ENCODE measurements at regions of chr16 and their contacts with region 1.

Region 1: GRCh38 chr16:50747207-50747956 is 5.5 kb downstream of the CYLD start:
- DNase-seq: peak in 7 of 9 donors; percentile 52 to 80 (median 73)
- ATAC-seq: peak; percentile 87
- H3K4me3 ChIP-seq: peak overlapping the region; percentile 33
- H3K4me3 Mint-ChIP-seq: peak overlapping the region; percentile 74 to 99 (median 94)
- H3K27ac ChIP-seq: peak overlapping the region; percentile 100
- H3K27ac Mint-ChIP-seq: peak overlapping the region; percentile 85 to 98 (median 93)
- H3K4me1 ChIP-seq: peaks cover 30 to 66% of the 10 kb centered on the region in 2 donors
- H3K4me1 Mint-ChIP-seq: peaks cover 34 to 78% (median 69%) of the 10 kb centered on the region in 7 donors
- H3K27me3 ChIP-seq: no peaks in the 10 kb centered on the region
- H3K27me3 Mint-ChIP-seq: no peaks in the 10 kb centered on the region

Region 2: DNA sequence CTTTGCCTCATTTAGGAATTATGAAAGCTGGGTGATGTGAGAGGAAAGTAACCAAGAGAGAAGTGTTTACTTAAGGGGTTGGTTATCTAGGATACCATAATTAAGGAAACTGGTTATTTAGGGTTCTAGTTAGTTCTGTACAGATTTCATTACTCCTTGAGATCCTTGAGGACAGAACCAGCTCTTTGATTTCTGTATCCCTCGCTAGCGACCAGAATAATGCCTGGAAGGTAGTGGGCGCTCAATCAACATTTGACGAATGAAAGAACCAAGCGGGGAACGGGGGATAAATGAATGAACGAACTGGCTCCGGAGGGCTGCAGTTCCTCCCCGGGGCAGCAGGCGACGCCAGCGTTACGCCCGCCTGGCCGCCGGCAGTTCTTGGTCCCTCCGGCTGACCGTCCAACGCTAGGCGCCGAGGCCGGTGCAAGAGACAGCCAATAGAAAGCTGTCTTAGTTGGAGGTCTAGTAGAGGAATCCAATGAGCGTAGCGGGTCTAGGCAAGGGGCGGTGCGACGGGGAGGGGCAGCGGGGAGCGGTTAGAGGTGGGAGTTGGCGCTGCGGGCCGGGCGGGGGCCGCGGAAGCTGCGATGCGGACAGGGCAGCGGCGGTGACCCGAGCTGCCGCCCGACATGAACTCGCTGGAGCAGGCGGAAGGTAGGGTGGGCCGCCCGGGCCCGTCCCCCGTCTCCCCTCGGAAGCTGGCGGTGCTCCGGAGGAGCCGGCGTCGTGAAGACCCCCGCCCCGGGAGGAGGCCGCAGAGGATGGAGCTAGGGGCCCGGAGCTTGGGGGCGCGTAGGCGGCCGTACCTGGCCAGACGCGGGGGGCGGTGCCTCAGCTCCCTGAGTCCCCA is 722.5 kb before region 1 on chr16 and contains the start of gene CNEP1R1:
- CTCF ChIA-PET with region 1: interaction called, 5 read pairs
- POLR2A ChIA-PET with region 1: no interaction called
- intact Hi-C with region 1: loop called (anchors 1 to 5 kb)
- DNase-seq: peak; percentile 82 to 95 (median 92)
- ATAC-seq: peak; percentile 98
- H3K4me3 ChIP-seq: peak within 1 kb of the TSS; percentile 97
- H3K4me3 Mint-ChIP-seq: peak within 1 kb of the TSS; percentile 88 to 99 (median 96)
- H3K27ac ChIP-seq: peak within 1 kb of the TSS; percentile 81
- H3K27ac Mint-ChIP-seq: peak within 1 kb of the TSS; percentile 87 to 97 (median 94)
- H3K4me1 ChIP-seq: peaks cover 11 to 16% of the 10 kb centered on the region in 2 donors
- H3K4me1 Mint-ChIP-seq: peaks cover 5 to 42% (median 28%) of the 10 kb centered on the region in 7 donors
- H3K27me3 ChIP-seq: no peaks in the 10 kb centered on the region
- H3K27me3 Mint-ChIP-seq: peaks cover 0 to 16% (median 0%) of the 10 kb centered on the region in 5 donors
- total RNA-seq, gene CNEP1R1: 26.8 to 41.0 (median 34.3) TPM

Region 3: GRCh38 chr16:50245417-50246298 is 501.7 kb before region 1 on chr16:
- CTCF ChIA-PET with region 1: no interaction called
- POLR2A ChIA-PET with region 1: no interaction called
- intact Hi-C with region 1: loop called in 1 of 2 experiments (anchors 1 kb)
- DNase-seq: peak in 5 of 9 donors; percentile 15 to 67 (median 18)
- ATAC-seq: peak; percentile 84
- H3K4me3 ChIP-seq: peak overlapping the region; percentile 42
- H3K4me3 Mint-ChIP-seq: peak overlapping the region; percentile 58 to 82 (median 76)
- H3K27ac ChIP-seq: no peak overlapping the region
- H3K27ac Mint-ChIP-seq: peak overlapping the region in 4 of 9 donors; percentile 41 to 80 (median 61)
- H3K4me1 ChIP-seq: peaks cover 6 to 8% of the 10 kb centered on the region in 2 donors
- H3K4me1 Mint-ChIP-seq: peaks cover 0 to 16% (median 6%) of the 10 kb centered on the region in 7 donors
- H3K27me3 ChIP-seq: no peaks in the 10 kb centered on the region
- H3K27me3 Mint-ChIP-seq: peaks cover 0 to 13% (median 0%) of the 10 kb centered on the region in 5 donors

Region 4: DNA sequence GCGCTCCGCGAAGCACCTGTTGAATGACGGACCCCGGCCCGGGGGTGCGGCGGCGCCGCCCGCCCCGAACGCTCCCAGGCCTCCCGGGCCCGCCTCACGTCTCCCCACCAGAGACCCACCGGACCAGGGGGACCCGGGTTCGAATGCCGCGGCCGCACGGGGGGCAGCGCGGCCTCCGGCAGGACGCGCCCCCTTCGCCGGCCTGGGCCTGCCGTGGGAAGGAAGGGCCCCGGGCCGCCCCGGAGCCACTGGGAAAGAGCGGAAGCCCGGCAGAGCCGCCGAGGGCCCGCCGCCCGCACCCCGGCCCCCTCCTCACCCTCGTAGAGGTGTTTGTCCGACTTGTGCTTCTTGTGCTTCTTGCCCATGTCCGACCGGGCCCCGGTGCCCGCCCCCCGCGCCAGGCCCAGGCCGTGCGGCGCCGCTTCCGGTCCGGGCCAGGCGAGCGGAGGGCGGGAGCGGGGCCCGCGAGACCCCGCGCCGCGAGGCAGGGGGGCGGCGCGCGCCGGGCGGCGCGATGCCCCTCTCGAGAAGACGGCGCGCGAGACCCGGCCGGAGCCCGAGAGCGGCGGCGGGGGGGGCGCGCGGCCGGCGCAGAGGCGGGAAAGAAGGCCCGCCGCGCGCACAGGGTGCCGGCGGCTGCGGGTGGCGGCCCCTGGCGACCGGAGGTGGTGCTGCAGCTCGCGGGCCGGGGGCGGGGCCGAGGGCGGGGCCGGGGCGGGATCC is 378.8 kb before region 1 on chr16 and contains the start of gene BRD7:
- CTCF ChIA-PET with region 1: interaction called, 4 read pairs
- POLR2A ChIA-PET with region 1: interaction called, 4 read pairs
- intact Hi-C with region 1: loop called (anchors 1 to 2 kb)
- DNase-seq: peak; percentile 50 to 82 (median 68)
- ATAC-seq: peak; percentile 98
- H3K4me3 ChIP-seq: peak within 1 kb of the TSS; percentile 61
- H3K4me3 Mint-ChIP-seq: peak within 1 kb of the TSS; percentile 92 to 98 (median 96)
- H3K27ac ChIP-seq: peak within 1 kb of the TSS; percentile 86
- H3K27ac Mint-ChIP-seq: peak within 1 kb of the TSS; percentile 92 to 99 (median 96)
- H3K4me1 ChIP-seq: peaks cover 27 to 39% of the 10 kb centered on the region in 2 donors
- H3K4me1 Mint-ChIP-seq: peaks cover 40 to 58% (median 56%) of the 10 kb centered on the region in 7 donors
- H3K27me3 ChIP-seq: no peaks in the 10 kb centered on the region
- H3K27me3 Mint-ChIP-seq: no peaks in the 10 kb centered on the region
- total RNA-seq, gene BRD7: 80.9 to 91.1 (median 85.0) TPM

Region 5: GRCh38 chr16:50671644-50672260 is 75.6 kb before region 1 on chr16:
- CTCF ChIA-PET with region 1: interaction called, 225 read pairs
- POLR2A ChIA-PET with region 1: interaction called, 53 read pairs
- intact Hi-C with region 1: loop called (anchors 1 kb)
- DNase-seq: peak in 7 of 9 donors; percentile 31 to 60 (median 48)
- ATAC-seq: peak; percentile 52
- H3K4me3 ChIP-seq: no peak overlapping the region
- H3K4me3 Mint-ChIP-seq: peak overlapping the region in 2 of 10 donors; percentile 3 to 19
- H3K27ac ChIP-seq: no peak overlapping the region
- H3K27ac Mint-ChIP-seq: peak overlapping the region in 8 of 9 donors; percentile 34 to 87 (median 84)
- H3K4me1 ChIP-seq: peaks cover 4 to 10% of the 10 kb centered on the region in 2 donors
- H3K4me1 Mint-ChIP-seq: peaks cover 24 to 44% (median 37%) of the 10 kb centered on the region in 7 donors
- H3K27me3 ChIP-seq: no peaks in the 10 kb centered on the region
- H3K27me3 Mint-ChIP-seq: no peaks in the 10 kb centered on the region

Region 6: DNA sequence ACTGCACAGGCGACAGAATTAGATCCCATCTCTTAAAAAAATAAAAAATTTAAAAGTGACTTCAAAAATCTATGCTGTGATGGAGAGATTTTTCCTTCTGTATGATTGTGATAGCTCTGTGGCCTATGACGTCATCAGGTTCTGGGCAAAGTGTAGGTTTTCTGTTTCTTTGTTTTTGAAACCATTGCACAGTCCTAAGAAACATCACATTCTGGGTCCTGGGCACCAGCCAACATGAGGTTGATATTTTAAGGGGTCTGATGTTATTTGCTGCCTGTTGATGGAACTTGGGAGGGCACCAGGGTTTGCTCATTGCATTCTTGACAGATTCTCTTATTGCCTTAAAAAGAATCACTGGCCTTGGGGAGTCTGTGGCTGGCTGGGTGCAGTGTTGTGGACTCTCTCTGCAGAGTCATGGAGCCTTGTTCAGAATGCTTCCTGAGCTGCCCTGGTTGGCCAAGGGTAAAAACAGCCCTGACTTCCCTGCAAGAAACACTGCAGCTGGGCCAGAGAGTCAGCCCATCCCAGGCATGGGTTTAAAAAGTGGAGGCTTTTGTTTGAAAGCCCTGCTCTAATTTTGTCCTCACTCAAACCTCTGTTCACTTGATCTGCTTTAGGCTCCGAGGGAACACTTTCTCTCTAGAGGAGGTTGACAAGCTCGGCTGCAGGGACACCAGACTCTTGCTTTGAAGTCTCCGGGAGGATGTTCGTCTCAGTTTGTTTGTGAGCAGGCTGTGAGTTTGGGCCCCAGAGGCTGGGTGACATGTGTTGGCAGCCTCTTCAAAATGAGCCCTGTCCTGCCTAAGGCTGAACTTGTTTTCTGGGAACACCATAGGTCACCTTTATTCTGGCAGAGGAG is 16.0 kb before region 1 on chr16:
- CTCF ChIA-PET with region 1: interaction called, 4 read pairs
- POLR2A ChIA-PET with region 1: interaction called, 12 read pairs
- intact Hi-C with region 1: loop called in 1 of 2 experiments (anchors 2 kb)
- DNase-seq: peak in 8 of 9 donors; percentile 22 to 48 (median 39)
- ATAC-seq: peak; percentile 58
- H3K4me3 ChIP-seq: no peak overlapping the region
- H3K4me3 Mint-ChIP-seq: peak overlapping the region; percentile 10 to 73 (median 51)
- H3K27ac ChIP-seq: peak overlapping the region; percentile 27
- H3K27ac Mint-ChIP-seq: peak overlapping the region; percentile 61 to 92 (median 84)
- H3K4me1 ChIP-seq: peaks cover 0 to 4% of the 10 kb centered on the region in 2 donors
- H3K4me1 Mint-ChIP-seq: peaks cover 16 to 37% (median 23%) of the 10 kb centered on the region in 7 donors
- H3K27me3 ChIP-seq: no peaks in the 10 kb centered on the region
- H3K27me3 Mint-ChIP-seq: no peaks in the 10 kb centered on the region

Region 7: GRCh38 chr16:50806099-50807062 is 59.0 kb after region 1 on chr16:
- CTCF ChIA-PET with region 1: interaction called, 11 read pairs
- POLR2A ChIA-PET with region 1: interaction called, 3 read pairs
- intact Hi-C with region 1: loop called (anchors 1 kb)
- DNase-seq: peak; percentile 66 to 92 (median 89)
- ATAC-seq: peak; percentile 98
- H3K4me3 ChIP-seq: peak overlapping the region; percentile 34
- H3K4me3 Mint-ChIP-seq: peak overlapping the region; percentile 12 to 90 (median 80)
- H3K27ac ChIP-seq: no peak overlapping the region
- H3K27ac Mint-ChIP-seq: peak overlapping the region; percentile 15 to 92 (median 81)
- H3K4me1 ChIP-seq: peaks cover 3 to 5% of the 10 kb centered on the region in 2 donors
- H3K4me1 Mint-ChIP-seq: peaks cover 8 to 19% (median 13%) of the 10 kb centered on the region in 7 donors
- H3K27me3 ChIP-seq: no peaks in the 10 kb centered on the region
- H3K27me3 Mint-ChIP-seq: no peaks in the 10 kb centered on the region

Region 8: GRCh38 chr16:50821586-50821985 is 74.2 kb after region 1 on chr16:
- CTCF ChIA-PET with region 1: no interaction called
- POLR2A ChIA-PET with region 1: no interaction called
- intact Hi-C with region 1: no loop called
- DNase-seq: no peak
- ATAC-seq: no peak
- H3K4me3 ChIP-seq: no peak overlapping the region
- H3K4me3 Mint-ChIP-seq: no peak overlapping the region
- H3K27ac ChIP-seq: no peak overlapping the region
- H3K27ac Mint-ChIP-seq: no peak overlapping the region
- H3K4me1 ChIP-seq: no peaks in the 10 kb centered on the region
- H3K4me1 Mint-ChIP-seq: peaks cover 0 to 6% (median 0%) of the 10 kb centered on the region in 7 donors
- H3K27me3 ChIP-seq: no peaks in the 10 kb centered on the region
- H3K27me3 Mint-ChIP-seq: peaks cover 8 to 24% (median 16%) of the 10 kb centered on the region in 5 donors

Measured in naive thymus-derived CD4-positive, alpha-beta T cell (primary cell).